Caco-2 (cell line): ENCODE measurements at regions of chr9 and their contacts with region 1.

Region 1: DNA sequence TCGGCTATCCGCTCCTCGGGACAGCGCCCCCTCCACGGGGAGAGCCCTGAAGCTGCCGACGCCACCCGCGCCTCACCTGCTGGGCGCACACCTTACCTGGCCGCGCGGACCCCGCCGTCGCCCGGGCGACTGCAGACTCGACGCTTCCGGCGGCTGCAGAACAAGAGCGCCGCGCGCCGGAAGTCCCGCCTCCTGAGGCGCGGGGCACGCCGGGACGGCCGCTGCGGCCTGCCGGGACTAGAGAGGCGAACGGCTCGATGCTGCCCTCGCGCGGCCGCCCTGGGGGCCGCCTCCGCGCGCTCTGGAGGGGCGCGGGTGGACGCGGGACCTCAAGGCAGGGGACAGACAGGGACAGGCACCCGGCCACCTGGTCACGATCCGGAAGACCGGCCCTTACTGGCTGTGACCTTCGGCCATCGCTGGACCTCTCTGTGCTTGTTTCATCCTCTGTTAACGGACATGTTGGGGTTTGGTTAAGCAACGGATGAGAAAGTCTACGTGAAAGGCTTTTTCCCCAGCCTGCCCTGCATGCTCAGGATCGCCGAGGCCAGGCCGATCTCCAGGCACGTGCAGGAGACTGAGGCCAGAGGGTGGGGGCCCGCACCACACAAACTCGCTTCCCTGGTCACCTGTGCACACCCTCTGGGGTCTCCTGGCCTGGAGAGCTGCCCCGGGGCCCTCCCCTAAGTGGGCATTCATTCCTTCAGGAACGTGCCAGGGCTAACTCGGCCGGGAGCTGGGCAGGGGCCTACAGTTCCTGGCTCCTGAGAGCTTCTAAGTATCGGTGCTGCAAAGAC is at the start of gene SNAPC4:
- DNase-seq: peak; percentile 85 to 93
- H3K4me3 ChIP-seq: peak within 1 kb of the TSS; percentile 96
- H3K4me3 Mint-ChIP-seq: peak within 1 kb of the TSS; percentile 91
- H3K27ac Mint-ChIP-seq: peak within 1 kb of the TSS; percentile 90
- H3K4me1 ChIP-seq: no peaks in the 10 kb centered on the region
- H3K4me1 Mint-ChIP-seq: peaks cover 20% of the 10 kb centered on the region
- H3K27me3 ChIP-seq: no peaks in the 10 kb centered on the region
- H3K27me3 Mint-ChIP-seq: no peaks in the 10 kb centered on the region
- CTCF ChIP-seq: peak; percentile 71 to 87
- total RNA-seq, gene SNAPC4: 15.3 and 17.2 TPM in 2 replicates

Region 2: GRCh38 chr9:136312436-136312835 is 87.8 kb before region 1 on chr9:
- CTCF ChIA-PET with region 1: no interaction called
- POLR2A ChIA-PET with region 1: no interaction called
- intact Hi-C with region 1: loop called (anchors 1 kb)
- DNase-seq: peak in 1 of 2 experiments; percentile 53
- H3K4me3 ChIP-seq: no peak overlapping the region
- H3K4me3 Mint-ChIP-seq: no peak overlapping the region
- H3K27ac Mint-ChIP-seq: no peak overlapping the region
- H3K4me1 ChIP-seq: no peaks in the 10 kb centered on the region
- H3K4me1 Mint-ChIP-seq: no peaks in the 10 kb centered on the region
- H3K27me3 ChIP-seq: no peaks in the 10 kb centered on the region
- H3K27me3 Mint-ChIP-seq: no peaks in the 10 kb centered on the region
- CTCF ChIP-seq: peak; percentile 37 to 46

Region 3: GRCh38 chr9:136334541-136334940 is 65.7 kb before region 1 on chr9:
- CTCF ChIA-PET with region 1: no interaction called
- POLR2A ChIA-PET with region 1: interaction called, 12 read pairs
- intact Hi-C with region 1: no loop called
- DNase-seq: no peak
- H3K4me3 ChIP-seq: no peak overlapping the region
- H3K4me3 Mint-ChIP-seq: no peak overlapping the region
- H3K27ac Mint-ChIP-seq: no peak overlapping the region
- H3K4me1 ChIP-seq: no peaks in the 10 kb centered on the region
- H3K4me1 Mint-ChIP-seq: no peaks in the 10 kb centered on the region
- H3K27me3 ChIP-seq: no peaks in the 10 kb centered on the region
- H3K27me3 Mint-ChIP-seq: no peaks in the 10 kb centered on the region
- CTCF ChIP-seq: no peak

Region 4: GRCh38 chr9:136345281-136346156 is 54.7 kb before region 1 on chr9:
- CTCF ChIA-PET with region 1: interaction called, 3 read pairs
- POLR2A ChIA-PET with region 1: no interaction called
- intact Hi-C with region 1: loop called (anchors 1 kb)
- DNase-seq: peak; percentile 86 to 91
- H3K4me3 ChIP-seq: no peak overlapping the region
- H3K4me3 Mint-ChIP-seq: no peak overlapping the region
- H3K27ac Mint-ChIP-seq: peak overlapping the region; percentile 1
- H3K4me1 ChIP-seq: peaks cover 20% of the 10 kb centered on the region
- H3K4me1 Mint-ChIP-seq: no peaks in the 10 kb centered on the region
- H3K27me3 ChIP-seq: no peaks in the 10 kb centered on the region
- H3K27me3 Mint-ChIP-seq: no peaks in the 10 kb centered on the region
- CTCF ChIP-seq: peak; percentile 63 to 75

Region 5: GRCh38 chr9:136363606-136364370 is 36.4 kb before region 1 on chr9 and contains the start of gene DNLZ:
- CTCF ChIA-PET with region 1: no interaction called
- POLR2A ChIA-PET with region 1: no interaction called
- intact Hi-C with region 1: loop called (anchors 5 kb)
- DNase-seq: peak; percentile 79 to 92
- H3K4me3 ChIP-seq: peak within 1 kb of the TSS; percentile 98
- H3K4me3 Mint-ChIP-seq: peak within 1 kb of the TSS; percentile 73
- H3K27ac Mint-ChIP-seq: peak within 1 kb of the TSS; percentile 32
- H3K4me1 ChIP-seq: peaks cover 7% of the 10 kb centered on the region
- H3K4me1 Mint-ChIP-seq: no peaks in the 10 kb centered on the region
- H3K27me3 ChIP-seq: no peaks in the 10 kb centered on the region
- H3K27me3 Mint-ChIP-seq: no peaks in the 10 kb centered on the region
- CTCF ChIP-seq: peak; percentile 87 to 97
- total RNA-seq, gene DNLZ: 27.1 and 29.1 TPM in 2 replicates